ENCODE measurements at regions of chr11 and their contacts with region 1.

Region 1: GRCh38 chr11:3824714-3825472 is 15.9 kb downstream of the RHOG start:
- DNase-seq: peak; percentile 65 to 83 (median 77)
- ATAC-seq: peak; percentile 97
- H3K4me3 ChIP-seq: no peak overlapping the region
- H3K4me3 Mint-ChIP-seq: no peak overlapping the region
- H3K27ac ChIP-seq: peak overlapping the region; percentile 38
- H3K27ac Mint-ChIP-seq: peak overlapping the region; percentile 60 to 96 (median 87)
- H3K4me1 ChIP-seq: peaks cover 13 to 14% of the 10 kb centered on the region in 2 donors
- H3K4me1 Mint-ChIP-seq: peaks cover 15 to 46% (median 44%) of the 10 kb centered on the region in 7 donors
- H3K27me3 ChIP-seq: no peaks in the 10 kb centered on the region
- H3K27me3 Mint-ChIP-seq: no peaks in the 10 kb centered on the region

Region 2: GRCh38 chr11:3674189-3674588 is 150.7 kb before region 1 on chr11:
- CTCF ChIA-PET with region 1: no interaction called
- POLR2A ChIA-PET with region 1: no interaction called
- intact Hi-C with region 1: no loop called
- DNase-seq: no peak
- ATAC-seq: no peak
- H3K4me3 ChIP-seq: no peak overlapping the region
- H3K4me3 Mint-ChIP-seq: no peak overlapping the region
- H3K27ac ChIP-seq: no peak overlapping the region
- H3K27ac Mint-ChIP-seq: peak overlapping the region in 3 of 9 donors; percentile 25 to 59 (median 41)
- H3K4me1 ChIP-seq: no peaks in the 10 kb centered on the region
- H3K4me1 Mint-ChIP-seq: peaks cover 0 to 2% (median 0%) of the 10 kb centered on the region in 7 donors
- H3K27me3 ChIP-seq: no peaks in the 10 kb centered on the region
- H3K27me3 Mint-ChIP-seq: no peaks in the 10 kb centered on the region

Region 3: GRCh38 chr11:3841426-3842350 is 16.8 kb after region 1 on chr11:
- CTCF ChIA-PET with region 1: interaction called, 20 read pairs
- POLR2A ChIA-PET with region 1: interaction called, 399 read pairs
- intact Hi-C with region 1: loop called (anchors 1 kb)
- DNase-seq: peak; percentile 82 to 98 (median 95)
- ATAC-seq: peak; percentile 84
- H3K4me3 ChIP-seq: peak overlapping the region; percentile 51
- H3K4me3 Mint-ChIP-seq: peak overlapping the region; percentile 76 to 99 (median 91)
- H3K27ac ChIP-seq: peak overlapping the region; percentile 95
- H3K27ac Mint-ChIP-seq: peak overlapping the region; percentile 87 to 99 (median 97)
- H3K4me1 ChIP-seq: peaks cover 30 to 34% of the 10 kb centered on the region in 2 donors
- H3K4me1 Mint-ChIP-seq: peaks cover 19 to 64% (median 54%) of the 10 kb centered on the region in 7 donors
- H3K27me3 ChIP-seq: no peaks in the 10 kb centered on the region
- H3K27me3 Mint-ChIP-seq: no peaks in the 10 kb centered on the region

Region 4: DNA sequence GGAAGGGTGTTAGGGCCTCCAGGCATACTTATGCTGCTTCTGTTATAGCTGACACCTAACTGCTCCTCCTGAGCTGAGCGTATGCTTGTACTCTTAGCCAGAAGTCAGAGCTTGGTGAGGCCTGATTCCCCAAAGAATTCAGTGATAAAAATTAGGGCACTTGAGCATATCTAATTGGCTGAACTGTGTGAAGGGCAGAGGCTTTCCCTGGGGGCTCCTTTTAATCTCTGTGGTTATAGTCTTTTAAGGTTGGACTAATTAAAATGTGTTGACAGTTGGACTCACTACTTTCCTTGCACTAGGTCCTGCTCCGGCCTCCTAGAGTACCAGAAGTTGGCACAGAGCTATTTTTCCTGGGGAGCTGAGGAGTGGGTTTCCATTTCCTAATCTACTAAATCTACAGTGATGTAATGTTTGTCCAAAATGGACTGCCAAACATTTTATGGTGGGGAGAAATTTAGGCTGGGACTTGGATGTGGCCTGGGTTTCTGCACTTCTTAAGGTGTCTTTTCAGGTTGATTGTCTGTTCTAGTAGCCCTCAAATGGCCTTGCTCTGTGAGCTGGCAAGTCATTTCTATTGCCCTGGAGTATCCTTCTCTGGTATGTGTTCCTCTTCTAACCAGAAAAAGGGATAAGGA is 48.9 kb after region 1 on chr11:
- CTCF ChIA-PET with region 1: no interaction called
- POLR2A ChIA-PET with region 1: no interaction called
- intact Hi-C with region 1: no loop called
- DNase-seq: no peak
- ATAC-seq: no peak
- H3K4me3 ChIP-seq: no peak overlapping the region
- H3K4me3 Mint-ChIP-seq: peak overlapping the region in 1 of 10 donors; percentile 25
- H3K27ac ChIP-seq: no peak overlapping the region
- H3K27ac Mint-ChIP-seq: peak overlapping the region in 8 of 9 donors; percentile 44 to 82 (median 70)
- H3K4me1 ChIP-seq: peaks cover 10 to 54% of the 10 kb centered on the region in 2 donors
- H3K4me1 Mint-ChIP-seq: peaks cover 60 to 94% (median 88%) of the 10 kb centered on the region in 7 donors
- H3K27me3 ChIP-seq: no peaks in the 10 kb centered on the region
- H3K27me3 Mint-ChIP-seq: no peaks in the 10 kb centered on the region

Measured in naive thymus-derived CD4-positive, alpha-beta T cell (primary cell).